Activated CD4-positive, alpha-beta T cell treated with anti-CD3 and anti-CD28 coated beads, Interleukin-2, amount 10 ng/mL, durations not matched to agents 24 days and 14 days (primary cell): ENCODE measurements at regions of chr2 and their contacts with region 1.

Region 1: GRCh38 chr2:39227628-39228412 is 15.9 kb downstream of the CDKL4 start:
- DNase-seq: peak; percentile 94
- H3K4me3 Mint-ChIP-seq: peak overlapping the region; percentile 65
- H3K27ac Mint-ChIP-seq: peak overlapping the region; percentile 87
- H3K4me1 Mint-ChIP-seq: peaks cover 39% of the 10 kb centered on the region
- H3K27me3 Mint-ChIP-seq: no peaks in the 10 kb centered on the region

Region 2: GRCh38 chr2:38740851-38741731 is 486.7 kb before region 1 on chr2:
- intact Hi-C with region 1: loop called (anchors 10 kb)
- DNase-seq: peak; percentile 67
- H3K4me3 Mint-ChIP-seq: no peak overlapping the region
- H3K27ac Mint-ChIP-seq: peak overlapping the region; percentile 13
- H3K4me1 Mint-ChIP-seq: peaks cover 28% of the 10 kb centered on the region
- H3K27me3 Mint-ChIP-seq: no peaks in the 10 kb centered on the region

Region 3: GRCh38 chr2:38947240-38948239 is 280.3 kb before region 1 on chr2:
- intact Hi-C with region 1: loop called (anchors 1 kb)
- DNase-seq: peak; percentile 91
- H3K4me3 Mint-ChIP-seq: no peak overlapping the region
- H3K27ac Mint-ChIP-seq: no peak overlapping the region
- H3K4me1 Mint-ChIP-seq: peaks cover 6% of the 10 kb centered on the region
- H3K27me3 Mint-ChIP-seq: peaks cover 13% of the 10 kb centered on the region

Region 4: DNA sequence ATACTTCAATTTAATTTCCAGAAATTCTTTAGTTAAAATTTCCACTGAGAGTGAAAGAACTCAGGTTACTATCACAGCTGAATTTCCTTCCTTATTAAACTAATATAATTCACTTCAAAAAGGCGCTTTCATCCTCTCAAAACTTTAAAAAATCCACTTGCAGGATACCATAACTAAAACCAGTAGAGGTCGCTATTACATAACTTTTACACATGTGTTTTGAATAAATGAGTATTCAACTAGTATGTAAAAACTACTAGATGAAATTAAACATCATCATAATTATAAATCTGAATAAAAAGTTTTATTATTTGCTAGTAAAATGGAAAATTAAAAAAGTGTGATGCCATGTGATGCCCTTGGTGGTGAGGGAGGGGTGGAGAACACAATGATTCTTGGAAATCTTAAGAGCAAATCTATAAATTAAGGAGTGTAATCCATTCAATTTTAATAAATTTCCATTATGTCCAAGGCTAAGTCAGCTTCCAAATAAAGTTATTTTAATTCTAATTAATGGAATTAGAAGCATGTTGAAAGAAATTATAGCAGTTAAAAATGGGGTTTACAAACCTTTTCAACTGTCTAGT is 168.4 kb before region 1 on chr2:
- intact Hi-C with region 1: loop called (anchors 1 kb)
- DNase-seq: peak; percentile 55
- H3K4me3 Mint-ChIP-seq: no peak overlapping the region
- H3K27ac Mint-ChIP-seq: peak overlapping the region; percentile 22
- H3K4me1 Mint-ChIP-seq: peaks cover 13% of the 10 kb centered on the region
- H3K27me3 Mint-ChIP-seq: no peaks in the 10 kb centered on the region

Region 5: GRCh38 chr2:39216346-39217191 is 11.3 kb before region 1 on chr2:
- intact Hi-C with region 1: loop called (anchors 1 kb)
- DNase-seq: peak; percentile 96
- H3K4me3 Mint-ChIP-seq: peak overlapping the region; percentile 62
- H3K27ac Mint-ChIP-seq: peak overlapping the region; percentile 86
- H3K4me1 Mint-ChIP-seq: peaks cover 61% of the 10 kb centered on the region
- H3K27me3 Mint-ChIP-seq: no peaks in the 10 kb centered on the region